Endothelial cell of umbilical vein (primary cell): ENCODE measurements at regions of chr14 and their contacts with region 1.

Region 1: GRCh38 chr14:95515596-95516552 is 576 bp downstream of the SYNE3 start:
- DNase-seq: peak; percentile 49
- H3K4me3 ChIP-seq: peak overlapping the region; percentile 51 to 58 (median 52)
- H3K27ac ChIP-seq: no peak overlapping the region
- H3K4me1 ChIP-seq: peaks cover 55% of the 10 kb centered on the region
- H3K27me3 ChIP-seq: no peaks in the 10 kb centered on the region
- CTCF ChIP-seq: peak; percentile 24 to 57
- POLR2A ChIP-seq: no peak

Region 2: DNA sequence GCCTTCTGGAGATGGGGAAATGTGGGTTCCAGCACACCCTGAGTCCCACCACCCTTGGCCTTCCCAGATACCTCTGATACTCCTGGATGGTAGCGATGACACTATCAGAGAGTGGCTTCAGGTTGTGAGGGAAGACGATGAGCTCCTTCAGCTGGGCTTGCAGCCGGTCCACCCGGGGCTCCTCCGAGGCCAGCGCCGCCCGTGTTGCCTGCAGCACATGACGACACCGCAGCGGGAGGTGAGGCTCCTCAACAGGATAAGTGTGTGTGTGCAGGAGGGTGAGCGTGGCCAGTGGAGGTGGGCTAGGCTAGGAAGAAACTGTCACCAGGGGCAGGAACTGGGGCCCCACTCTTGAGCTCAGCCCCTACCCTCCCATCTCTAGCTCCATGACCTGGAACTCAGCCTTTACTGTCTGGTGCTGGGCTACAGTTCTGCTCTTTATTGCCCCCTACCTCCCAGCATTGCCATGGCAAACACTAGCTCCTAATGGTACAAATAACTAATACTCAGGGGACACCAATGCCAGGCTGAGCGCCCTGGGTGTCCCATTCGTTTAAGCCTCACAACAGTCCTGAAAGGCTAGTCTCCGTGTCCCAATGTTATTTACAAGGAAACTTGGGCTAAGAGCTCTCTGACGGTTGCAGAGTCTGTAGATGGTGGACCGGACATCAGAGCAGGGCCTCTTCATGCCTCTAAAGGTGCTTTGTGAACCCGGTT is 63.5 kb before region 1 on chr14:
- CTCF ChIA-PET with region 1: interaction called, 17 read pairs
- POLR2A ChIA-PET with region 1: interaction called, 3 read pairs
- dilution Hi-C with region 1: no loop called
- intact Hi-C with region 1: no loop called
- DNase-seq: peak; percentile 23
- H3K4me3 ChIP-seq: no peak overlapping the region
- H3K27ac ChIP-seq: no peak overlapping the region
- H3K4me1 ChIP-seq: no peaks in the 10 kb centered on the region
- H3K27me3 ChIP-seq: no peaks in the 10 kb centered on the region
- CTCF ChIP-seq: peak; percentile 33 to 49
- POLR2A ChIP-seq: no peak

Region 3: DNA sequence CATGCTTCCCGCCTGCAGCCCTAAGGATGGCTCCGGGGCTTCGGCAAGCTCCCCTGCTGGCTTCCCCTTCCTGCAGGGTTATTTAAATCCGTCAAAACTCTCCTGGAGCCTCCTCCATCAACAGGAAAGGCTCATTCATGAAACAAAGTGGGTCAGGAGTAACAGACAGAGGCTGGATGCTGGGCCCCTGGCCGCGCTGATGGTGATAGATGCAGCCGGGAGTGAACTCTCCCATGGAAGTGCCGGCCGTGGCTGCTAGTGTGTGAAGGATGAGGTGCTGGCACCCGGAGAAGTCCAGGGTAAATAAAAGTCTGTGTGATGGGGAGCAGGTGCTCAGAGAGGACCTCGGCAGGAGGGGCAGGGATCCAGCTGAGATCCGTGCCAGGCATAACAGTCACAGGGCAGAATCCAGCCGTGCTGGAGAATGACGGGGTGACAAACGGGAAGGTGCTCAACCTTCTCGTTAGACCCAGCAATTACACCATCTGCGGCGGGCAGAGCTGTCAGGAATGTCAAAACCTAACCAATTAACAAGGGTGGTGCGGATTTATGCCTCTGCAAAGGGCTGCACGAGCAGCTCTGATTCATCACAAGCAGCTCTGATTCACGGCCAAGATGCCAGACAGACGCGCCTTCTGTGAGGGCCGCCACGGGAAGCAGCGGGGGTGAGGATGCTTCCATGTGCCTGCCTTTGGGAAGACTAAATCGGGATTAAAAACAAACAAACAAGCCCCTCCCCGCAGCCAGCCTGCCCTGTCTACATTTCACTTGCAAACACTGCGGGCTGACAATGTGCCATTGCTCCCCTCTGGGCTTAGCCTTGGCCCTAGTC is 55.0 kb before region 1 on chr14:
- CTCF ChIA-PET with region 1: interaction called, 4 read pairs
- POLR2A ChIA-PET with region 1: no interaction called
- dilution Hi-C with region 1: no loop called
- intact Hi-C with region 1: loop called (anchors 1 kb)
- DNase-seq: peak; percentile 52
- H3K4me3 ChIP-seq: no peak overlapping the region
- H3K27ac ChIP-seq: no peak overlapping the region
- H3K4me1 ChIP-seq: peaks cover 24% of the 10 kb centered on the region
- H3K27me3 ChIP-seq: no peaks in the 10 kb centered on the region
- CTCF ChIP-seq: no peak
- POLR2A ChIP-seq: no peak

Region 4: GRCh38 chr14:95495538-95496025 is 20.3 kb before region 1 on chr14:
- CTCF ChIA-PET with region 1: interaction called, 10 read pairs
- POLR2A ChIA-PET with region 1: no interaction called
- dilution Hi-C with region 1: no loop called
- intact Hi-C with region 1: loop called (anchors 2 kb)
- DNase-seq: peak; percentile 68
- H3K4me3 ChIP-seq: no peak overlapping the region
- H3K27ac ChIP-seq: peak overlapping the region; percentile 57
- H3K4me1 ChIP-seq: peaks cover 27% of the 10 kb centered on the region
- H3K27me3 ChIP-seq: no peaks in the 10 kb centered on the region
- CTCF ChIP-seq: no peak
- POLR2A ChIP-seq: no peak

Region 5: DNA sequence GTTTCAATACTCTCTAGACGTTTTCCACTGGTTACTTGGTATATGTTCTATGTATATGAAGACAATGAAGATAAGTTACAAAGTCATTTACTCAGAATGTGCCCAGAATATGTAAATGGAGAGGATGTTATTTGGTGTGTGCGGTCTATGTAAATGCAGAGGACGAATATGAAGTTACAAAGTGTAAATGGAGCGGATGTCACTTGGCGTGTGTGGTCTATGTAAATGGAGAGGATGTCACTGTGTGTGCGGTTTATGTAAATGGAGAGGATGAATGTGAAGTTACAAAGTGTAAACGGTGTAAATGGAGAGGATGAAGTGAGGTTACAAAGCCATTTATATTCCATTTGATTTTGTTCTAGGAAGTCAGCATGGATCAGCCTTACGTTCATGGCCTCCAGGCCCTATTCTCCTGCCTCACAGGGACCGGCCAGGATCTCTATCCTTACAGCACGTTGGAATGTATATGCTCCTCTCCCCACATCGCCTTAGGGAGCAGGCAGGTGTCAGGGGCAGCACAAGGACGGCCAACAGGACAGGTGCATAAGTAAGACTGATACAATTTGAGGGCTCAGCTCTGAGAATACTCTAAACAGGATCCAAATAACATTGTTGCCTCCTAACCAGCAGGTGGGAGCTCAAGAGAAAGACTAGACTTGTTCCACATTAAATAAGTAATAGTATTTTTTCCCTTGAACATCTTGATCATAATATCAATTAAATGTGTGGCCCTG is 61.4 kb after region 1 on chr14:
- CTCF ChIA-PET with region 1: no interaction called
- POLR2A ChIA-PET with region 1: no interaction called
- dilution Hi-C with region 1: no loop called
- intact Hi-C with region 1: no loop called
- DNase-seq: no peak
- H3K4me3 ChIP-seq: no peak overlapping the region
- H3K27ac ChIP-seq: no peak overlapping the region
- H3K4me1 ChIP-seq: no peaks in the 10 kb centered on the region
- H3K27me3 ChIP-seq: no peaks in the 10 kb centered on the region
- CTCF ChIP-seq: no peak
- POLR2A ChIP-seq: no peak